Endothelial cell of umbilical vein (primary cell): ENCODE measurements at regions of chr3 and their contacts with region 1.

Region 1: DNA sequence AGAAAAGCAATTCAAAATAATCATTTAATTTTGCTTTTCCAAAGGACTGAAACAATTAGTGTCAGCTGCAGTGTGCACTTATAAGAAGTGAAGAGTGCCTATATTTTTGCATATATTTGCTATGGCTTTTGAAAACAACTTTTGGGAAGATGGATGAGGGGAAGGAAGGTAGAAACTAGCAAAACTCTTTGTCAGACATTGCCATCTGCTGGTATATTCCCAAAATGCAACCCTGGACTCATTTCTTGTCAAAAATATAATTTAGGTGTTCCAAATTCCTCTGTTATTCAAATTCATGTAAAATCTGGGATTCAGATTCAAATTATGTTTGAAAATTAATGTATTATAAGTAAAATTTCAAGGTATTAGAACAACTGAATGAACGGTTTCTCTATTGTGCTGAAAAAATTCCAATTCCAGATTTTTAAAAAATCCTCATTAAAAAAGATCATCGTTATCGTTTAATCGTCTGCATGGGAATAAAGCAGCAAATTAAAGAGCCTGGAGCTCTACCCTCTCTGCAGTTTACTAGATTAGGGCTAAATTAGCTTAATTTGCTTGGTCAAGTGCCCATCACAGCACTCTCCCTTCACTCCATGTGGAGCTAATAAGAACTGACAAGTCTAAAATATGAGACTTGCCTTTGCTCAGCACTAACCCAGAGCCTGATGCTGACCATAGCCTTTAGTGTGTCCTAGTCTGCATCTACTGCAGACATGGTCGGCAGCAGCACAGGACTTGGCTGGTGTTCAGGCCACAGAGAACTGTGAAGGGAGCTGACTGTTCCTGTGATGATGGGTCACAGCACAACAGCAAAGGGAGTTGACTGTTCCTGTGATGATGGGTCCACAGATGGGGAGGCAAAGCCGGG is 67.9 kb upstream of the MITF start:
- DNase-seq: peak; percentile 62
- H3K4me3 ChIP-seq: no peak overlapping the region
- H3K27ac ChIP-seq: no peak overlapping the region
- H3K4me1 ChIP-seq: peaks cover 4% of the 10 kb centered on the region
- H3K27me3 ChIP-seq: no peaks in the 10 kb centered on the region
- CTCF ChIP-seq: peak; percentile 48 to 59
- POLR2A ChIP-seq: no peak

Region 2: GRCh38 chr3:69324362-69325025 is 346.8 kb before region 1 on chr3:
- CTCF ChIA-PET with region 1: no interaction called
- POLR2A ChIA-PET with region 1: no interaction called
- dilution Hi-C with region 1: no loop called
- intact Hi-C with region 1: loop called (anchors 5 kb)
- DNase-seq: no peak
- H3K4me3 ChIP-seq: no peak overlapping the region
- H3K27ac ChIP-seq: no peak overlapping the region
- H3K4me1 ChIP-seq: peaks cover 28% of the 10 kb centered on the region
- H3K27me3 ChIP-seq: no peaks in the 10 kb centered on the region
- CTCF ChIP-seq: no peak
- POLR2A ChIP-seq: no peak

Region 3: DNA sequence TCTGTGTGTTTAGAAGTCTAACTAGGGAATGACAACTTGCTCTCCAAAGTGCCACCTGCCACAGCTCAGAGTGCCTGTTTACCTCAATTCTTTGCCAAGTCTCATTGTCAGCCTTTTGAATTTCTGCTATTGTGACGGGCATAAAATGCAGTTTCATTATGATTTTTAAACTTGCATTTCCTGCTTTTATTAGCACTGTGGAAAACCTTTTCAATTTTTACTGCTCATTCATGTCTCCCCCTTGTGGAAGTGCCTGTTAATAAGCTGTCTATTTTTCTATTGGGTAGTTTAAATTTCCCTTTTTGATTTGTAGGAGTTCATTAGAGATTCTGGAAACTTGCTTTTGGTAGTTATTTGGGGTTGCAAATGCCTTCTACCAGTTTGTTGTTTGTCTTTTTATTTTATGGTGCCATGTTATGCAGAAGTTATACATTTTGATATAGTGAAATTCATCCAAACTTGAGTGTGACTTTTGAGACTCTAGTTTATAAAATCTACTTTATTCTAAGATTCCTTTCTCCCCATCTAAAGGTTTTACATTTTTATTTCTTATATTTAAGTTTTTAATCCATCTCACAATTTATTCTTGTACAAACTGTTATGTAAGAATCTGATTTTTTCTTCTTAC is 231.6 kb before region 1 on chr3:
- CTCF ChIA-PET with region 1: interaction called, 34 read pairs
- POLR2A ChIA-PET with region 1: no interaction called
- dilution Hi-C with region 1: no loop called
- intact Hi-C with region 1: loop called (anchors 2 kb)
- DNase-seq: peak; percentile 61
- H3K4me3 ChIP-seq: no peak overlapping the region
- H3K27ac ChIP-seq: no peak overlapping the region
- H3K4me1 ChIP-seq: no peaks in the 10 kb centered on the region
- H3K27me3 ChIP-seq: no peaks in the 10 kb centered on the region
- CTCF ChIP-seq: peak; percentile 41 to 58
- POLR2A ChIP-seq: no peak

Region 4: DNA sequence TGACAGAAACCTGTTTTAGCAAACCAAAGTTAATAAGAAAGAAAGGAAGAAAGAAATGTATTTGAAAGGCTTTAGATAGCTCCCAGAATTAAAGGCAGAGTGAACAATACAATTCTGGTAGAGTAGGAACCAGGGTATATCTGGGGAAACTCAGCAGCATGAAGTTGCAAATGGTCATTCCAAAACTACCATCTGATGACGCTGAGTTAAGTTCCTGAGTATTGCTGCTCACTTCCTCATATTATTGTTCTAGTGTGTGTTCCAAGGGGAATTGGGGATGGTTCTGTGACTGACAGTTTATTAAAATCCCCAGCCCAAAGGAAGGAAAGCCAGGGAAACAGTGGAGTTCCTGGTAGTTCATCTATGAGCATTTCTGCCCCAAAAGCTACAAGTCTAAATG is 197.1 kb before region 1 on chr3:
- CTCF ChIA-PET with region 1: no interaction called
- POLR2A ChIA-PET with region 1: no interaction called
- dilution Hi-C with region 1: no loop called
- intact Hi-C with region 1: no loop called
- DNase-seq: no peak
- H3K4me3 ChIP-seq: no peak overlapping the region
- H3K27ac ChIP-seq: no peak overlapping the region
- H3K4me1 ChIP-seq: no peaks in the 10 kb centered on the region
- H3K27me3 ChIP-seq: peaks cover 10 to 22% of the 10 kb centered on the region in 2 experiments
- CTCF ChIP-seq: no peak
- POLR2A ChIP-seq: no peak

Region 5: GRCh38 chr3:69568458-69568857 is 102.9 kb before region 1 on chr3:
- CTCF ChIA-PET with region 1: interaction called, 3 read pairs
- POLR2A ChIA-PET with region 1: no interaction called
- dilution Hi-C with region 1: no loop called
- intact Hi-C with region 1: loop called (anchors 1 kb)
- DNase-seq: no peak
- H3K4me3 ChIP-seq: no peak overlapping the region
- H3K27ac ChIP-seq: no peak overlapping the region
- H3K4me1 ChIP-seq: no peaks in the 10 kb centered on the region
- H3K27me3 ChIP-seq: peaks cover 5% of the 10 kb centered on the region in 2 experiments
- CTCF ChIP-seq: no peak
- POLR2A ChIP-seq: no peak

Region 6: DNA sequence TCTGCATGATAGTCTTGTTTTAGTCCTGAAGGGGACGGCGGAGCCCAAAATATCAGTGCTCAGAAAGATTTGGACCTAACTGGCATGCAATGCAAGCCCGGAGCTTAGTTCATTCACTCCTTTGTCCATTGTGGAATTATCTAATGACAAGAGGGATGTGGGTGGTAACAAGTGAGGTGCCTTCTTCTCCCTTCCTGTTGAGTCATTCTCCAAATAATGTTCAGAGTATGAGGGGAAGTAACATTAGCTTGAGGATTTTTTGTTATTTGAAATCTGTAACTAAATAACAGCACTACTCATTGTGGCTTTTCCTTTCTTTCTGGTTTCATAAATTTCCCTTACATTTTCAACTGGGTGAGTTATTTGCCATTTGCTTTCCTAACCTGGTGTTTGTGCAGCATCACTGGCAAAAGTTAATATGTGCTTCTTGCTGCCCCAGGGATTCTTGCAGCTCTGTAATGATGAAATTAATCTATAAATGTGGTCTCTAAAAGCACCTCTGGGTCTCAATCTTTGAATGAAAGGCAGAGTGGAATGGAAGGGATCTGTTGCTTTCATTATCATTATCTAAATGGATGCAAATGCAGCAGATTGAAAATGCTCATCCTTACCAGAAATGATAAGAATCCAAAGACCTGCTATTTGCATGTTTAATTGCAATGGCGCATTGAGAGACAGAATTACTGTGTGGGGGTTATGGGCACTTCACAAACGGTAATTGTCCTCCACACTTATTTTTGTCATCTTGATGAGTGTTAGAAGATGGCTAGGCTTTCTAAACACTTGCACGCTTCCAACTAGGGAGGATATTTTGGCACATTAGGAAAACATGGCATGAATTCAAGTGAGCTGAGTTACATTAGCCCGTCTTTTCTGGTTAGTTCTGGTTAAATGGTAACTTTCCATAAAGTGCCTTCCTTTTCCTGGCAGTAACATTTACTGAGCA is 21.9 kb before region 1 on chr3:
- CTCF ChIA-PET with region 1: interaction called, 15 read pairs
- POLR2A ChIA-PET with region 1: no interaction called
- dilution Hi-C with region 1: no loop called
- intact Hi-C with region 1: loop called (anchors 1 kb)
- DNase-seq: peak; percentile 69
- H3K4me3 ChIP-seq: peak overlapping the region in 2 of 3 experiments; percentile 4 to 40
- H3K27ac ChIP-seq: peak overlapping the region; percentile 66
- H3K4me1 ChIP-seq: peaks cover 28% of the 10 kb centered on the region
- H3K27me3 ChIP-seq: no peaks in the 10 kb centered on the region
- CTCF ChIP-seq: no peak
- POLR2A ChIP-seq: no peak